Heart right ventricle (tissue), 16 donors: ENCODE measurements at regions of chr10 and their contacts with region 1.

Region 1: GRCh38 chr10:102432162-102432950 is at the start of gene CUEDC2:
- DNase-seq: peak; percentile 97 to 98
- ATAC-seq: peak; percentile 96 to 98 (median 98)
- H3K4me3 ChIP-seq: peak within 1 kb of the TSS; percentile 82 to 99 (median 94)
- H3K27ac ChIP-seq: peak within 1 kb of the TSS; percentile 60 to 94 (median 90)
- H3K4me1 ChIP-seq: peaks cover 4 to 52% (median 12%) of the 10 kb centered on the region in 9 donors
- H3K27me3 ChIP-seq: peaks cover 0 to 15% (median 5%) of the 10 kb centered on the region in 7 donors
- CTCF ChIP-seq: no peak
- total RNA-seq, gene CUEDC2: 65.7 to 84.3 (median 79.1) TPM

Region 2: GRCh38 chr10:102208311-102209035 is 223.9 kb before region 1 on chr10:
- intact Hi-C with region 1: no loop called
- DNase-seq: no peak
- ATAC-seq: peak in 5 of 8 donors; percentile 16 to 35 (median 29)
- H3K4me3 ChIP-seq: no peak overlapping the region
- H3K27ac ChIP-seq: no peak overlapping the region
- H3K4me1 ChIP-seq: peaks cover 0 to 16% (median 12%) of the 10 kb centered on the region in 9 donors
- H3K27me3 ChIP-seq: no peaks in the 10 kb centered on the region
- CTCF ChIP-seq: no peak

Region 3: GRCh38 chr10:102503281-102504220 is 71.2 kb after region 1 on chr10 and contains the start of gene SUFU:
- intact Hi-C with region 1: loop called in 2 of 10 experiments (anchors 2 to 5 kb)
- DNase-seq: peak; percentile 96 to 99
- ATAC-seq: peak; percentile 80 to 90 (median 84)
- H3K4me3 ChIP-seq: peak within 1 kb of the TSS; percentile 66 to 99 (median 88)
- H3K27ac ChIP-seq: peak within 1 kb of the TSS in 9 of 10 donors; percentile 79 to 96 (median 94)
- H3K4me1 ChIP-seq: peaks cover 11 to 69% (median 47%) of the 10 kb centered on the region in 9 donors
- H3K27me3 ChIP-seq: no peaks in the 10 kb centered on the region
- CTCF ChIP-seq: peak; percentile 89 to 99 (median 94)
- total RNA-seq, gene SUFU: 5.7 to 10.1 (median 7.5) TPM

Region 4: DNA sequence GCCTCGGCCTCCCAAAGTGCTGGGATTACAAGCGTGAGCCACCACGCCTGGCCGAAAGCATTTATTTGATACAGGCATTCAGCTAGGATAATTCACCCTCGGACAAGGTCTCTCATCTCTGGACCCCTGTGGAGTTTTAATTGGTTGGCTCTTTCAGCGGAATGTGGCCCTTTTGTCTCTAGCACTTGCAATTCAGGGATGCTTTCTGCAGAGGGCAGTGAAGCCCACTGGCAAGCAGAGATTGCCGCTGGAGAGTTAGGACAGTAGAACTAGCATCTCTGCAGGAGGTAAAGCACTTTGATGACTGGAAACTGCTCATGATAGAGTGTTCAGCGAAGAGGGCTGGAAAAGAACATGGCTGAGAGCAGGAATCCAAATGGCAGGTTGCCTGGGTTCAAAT is 133.4 kb after region 1 on chr10:
- intact Hi-C with region 1: no loop called
- DNase-seq: no peak
- ATAC-seq: no peak
- H3K4me3 ChIP-seq: no peak overlapping the region
- H3K27ac ChIP-seq: no peak overlapping the region
- H3K4me1 ChIP-seq: peaks cover 0 to 15% (median 0%) of the 10 kb centered on the region in 9 donors
- H3K27me3 ChIP-seq: no peaks in the 10 kb centered on the region
- CTCF ChIP-seq: no peak